ENCODE measurements at regions of chr3 and their contacts with region 1.

Region 1: GRCh38 chr3:46449755-46450552 is 14.8 kb downstream of the LTF start:
- DNase-seq: peak; percentile 24
- ATAC-seq: peak; percentile 91
- H3K4me3 ChIP-seq: no peak overlapping the region
- H3K27ac ChIP-seq: no peak overlapping the region
- H3K4me1 ChIP-seq: no peaks in the 10 kb centered on the region
- H3K27me3 ChIP-seq: peaks cover 13% of the 10 kb centered on the region; the same call in 1 of the 2 replicates
- CTCF ChIP-seq: peak; percentile 34 to 81 (median 78); a peak in 5 of 6 replicates
- POLR2A ChIP-seq: no peak
- RAD21 ChIP-seq: peak; percentile 35; the same call in 1 of the 2 replicates

Region 2: GRCh38 chr3:46438831-46439230 is 11.1 kb before region 1 on chr3:
- CTCF ChIA-PET with region 1: interaction called, 12 read pairs
- POLR2A ChIA-PET with region 1: no interaction called
- RAD21 ChIA-PET with region 1: no interaction called
- intact Hi-C with region 1: no loop called
- DNase-seq: no peak
- ATAC-seq: no peak
- H3K4me3 ChIP-seq: no peak overlapping the region
- H3K27ac ChIP-seq: no peak overlapping the region
- H3K4me1 ChIP-seq: no peaks in the 10 kb centered on the region
- H3K27me3 ChIP-seq: no peaks in the 10 kb centered on the region
- CTCF ChIP-seq: no peak
- POLR2A ChIP-seq: no peak
- RAD21 ChIP-seq: no peak